Mammary epithelial cell (primary cell): ENCODE measurements at regions of chr20 and their contacts with region 1.

Region 1: GRCh38 chr20:58850693-58851174 is at the start of gene GNAS-AS1:
- DNase-seq: peak; percentile 63
- H3K4me3 ChIP-seq: peak within 1 kb of the TSS; percentile 39 to 64 (median 62)
- H3K27ac ChIP-seq: no peak within 1 kb of the TSS
- H3K4me1 ChIP-seq: peaks cover 12% of the 10 kb centered on the region
- H3K27me3 ChIP-seq: peaks cover 18% of the 10 kb centered on the region
- CTCF ChIP-seq: peak in 1 of 2 donors; percentile 17
- total RNA-seq, gene GNAS-AS1: 0.33 to 0.73 TPM

Region 2: GRCh38 chr20:58236612-58237330 is 614.0 kb before region 1 on chr20:
- CTCF ChIA-PET with region 1: no interaction called
- dilution Hi-C with region 1: no loop called
- in situ Hi-C with region 1: loop called (anchors 25 kb)
- intact Hi-C with region 1: no loop called
- DNase-seq: peak; percentile 58
- H3K4me3 ChIP-seq: peak overlapping the region; percentile 51 to 74 (median 52)
- H3K27ac ChIP-seq: peak overlapping the region; percentile 48
- H3K4me1 ChIP-seq: peaks cover 8% of the 10 kb centered on the region
- H3K27me3 ChIP-seq: no peaks in the 10 kb centered on the region
- CTCF ChIP-seq: peak; percentile 92 to 98

Region 3: DNA sequence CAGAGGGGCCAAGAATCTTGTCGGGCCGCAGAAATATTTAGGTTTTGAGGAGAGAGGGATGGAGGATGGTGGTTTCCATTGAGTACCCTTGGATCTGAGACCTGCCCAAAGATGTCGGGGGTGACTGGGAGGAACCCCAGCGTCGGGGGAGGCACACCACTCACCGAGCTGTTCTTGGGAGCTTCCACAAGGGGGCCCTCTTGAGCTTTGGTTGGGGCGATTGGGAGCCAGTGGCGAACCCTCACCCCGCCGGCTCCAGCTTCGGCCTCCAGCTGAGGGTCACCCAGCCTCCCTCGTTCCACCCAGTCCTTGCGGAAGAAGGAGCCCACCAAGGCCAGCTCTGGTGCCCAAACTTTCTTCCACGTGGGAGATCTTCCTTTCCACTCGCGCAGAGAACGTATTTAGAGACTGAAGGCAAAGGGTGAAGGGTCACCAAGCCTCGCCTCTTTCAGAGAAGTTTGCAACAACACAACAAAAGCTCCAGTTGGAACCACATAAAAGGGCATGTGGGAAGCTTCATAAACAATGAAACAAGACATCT is 369.2 kb before region 1 on chr20:
- CTCF ChIA-PET with region 1: no interaction called
- dilution Hi-C with region 1: no loop called
- in situ Hi-C with region 1: no loop called
- intact Hi-C with region 1: loop called (anchors 5 kb)
- DNase-seq: peak; percentile 29
- H3K4me3 ChIP-seq: no peak overlapping the region
- H3K27ac ChIP-seq: no peak overlapping the region
- H3K4me1 ChIP-seq: peaks cover 4% of the 10 kb centered on the region
- H3K27me3 ChIP-seq: no peaks in the 10 kb centered on the region
- CTCF ChIP-seq: peak; percentile 29 to 68

Region 4: GRCh38 chr20:58584881-58585752 is 265.6 kb before region 1 on chr20:
- CTCF ChIA-PET with region 1: no interaction called
- dilution Hi-C with region 1: no loop called
- in situ Hi-C with region 1: no loop called
- intact Hi-C with region 1: no loop called
- DNase-seq: no peak
- H3K4me3 ChIP-seq: no peak overlapping the region
- H3K27ac ChIP-seq: no peak overlapping the region
- H3K4me1 ChIP-seq: no peaks in the 10 kb centered on the region
- H3K27me3 ChIP-seq: peaks cover 2% of the 10 kb centered on the region
- CTCF ChIP-seq: no peak

Region 5: GRCh38 chr20:58755766-58756449 is 94.8 kb before region 1 on chr20:
- CTCF ChIA-PET with region 1: no interaction called
- dilution Hi-C with region 1: loop called (anchors 5 kb)
- in situ Hi-C with region 1: no loop called
- intact Hi-C with region 1: no loop called
- DNase-seq: no peak
- H3K4me3 ChIP-seq: no peak overlapping the region
- H3K27ac ChIP-seq: no peak overlapping the region
- H3K4me1 ChIP-seq: no peaks in the 10 kb centered on the region
- H3K27me3 ChIP-seq: no peaks in the 10 kb centered on the region
- CTCF ChIP-seq: no peak

Region 6: DNA sequence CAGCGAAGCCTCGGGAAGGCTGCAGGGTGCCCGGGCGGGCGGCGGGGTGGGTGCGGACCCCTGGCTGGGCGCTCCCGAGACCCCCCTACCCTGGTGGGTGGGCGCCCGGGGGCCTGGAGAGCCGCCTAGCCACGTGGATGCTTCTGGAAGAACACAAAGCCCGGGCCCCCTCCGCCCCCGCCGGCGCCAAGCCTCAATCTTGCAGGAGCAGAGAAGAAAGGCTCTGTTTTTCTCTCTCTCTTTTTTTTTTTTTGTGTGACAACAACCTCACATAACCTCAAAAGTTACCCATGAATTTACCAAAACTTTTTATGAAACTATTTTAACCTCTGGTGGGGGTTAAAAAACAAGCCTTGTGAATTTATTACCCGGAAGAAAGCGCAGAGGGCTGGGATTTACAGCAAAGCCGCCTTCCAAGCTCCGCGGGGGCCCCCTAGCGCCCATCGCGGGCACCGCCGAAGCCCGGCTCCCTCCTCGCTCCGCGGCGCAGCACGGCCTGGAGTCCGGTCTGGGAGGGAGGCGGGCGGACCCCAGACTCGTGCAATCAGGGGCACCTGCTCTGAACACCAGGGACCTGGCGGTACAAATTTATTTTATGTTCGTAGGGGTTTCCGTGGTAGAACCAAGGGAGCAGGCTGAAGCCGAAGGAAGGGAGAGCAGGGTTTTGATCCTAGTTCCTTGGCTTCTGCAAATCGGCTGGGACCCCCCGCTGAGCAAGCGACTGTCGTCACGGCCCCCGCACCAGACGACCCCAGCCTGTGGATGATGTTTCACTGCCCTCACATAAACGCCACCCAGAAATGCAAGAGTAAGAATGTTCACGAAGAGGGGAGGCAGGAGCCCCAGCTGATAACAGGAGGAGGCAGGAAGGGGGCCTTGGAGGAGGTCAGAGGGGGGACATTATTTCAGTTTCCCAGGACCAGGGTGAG is 371.8 kb after region 1 on chr20:
- CTCF ChIA-PET with region 1: no interaction called
- dilution Hi-C with region 1: loop called (anchors 25 kb)
- in situ Hi-C with region 1: no loop called
- intact Hi-C with region 1: no loop called
- DNase-seq: peak; percentile 39
- H3K4me3 ChIP-seq: peak overlapping the region; percentile 42 to 74 (median 45)
- H3K27ac ChIP-seq: no peak overlapping the region
- H3K4me1 ChIP-seq: peaks cover 6% of the 10 kb centered on the region
- H3K27me3 ChIP-seq: peaks cover 9% of the 10 kb centered on the region
- CTCF ChIP-seq: peak; percentile 72 to 92

Region 7: GRCh38 chr20:59455402-59456341 is 604.9 kb after region 1 on chr20:
- CTCF ChIA-PET with region 1: no interaction called
- dilution Hi-C with region 1: no loop called
- in situ Hi-C with region 1: loop called (anchors 25 kb)
- intact Hi-C with region 1: no loop called
- DNase-seq: peak; percentile 5
- H3K4me3 ChIP-seq: no peak overlapping the region
- H3K27ac ChIP-seq: no peak overlapping the region
- H3K4me1 ChIP-seq: no peaks in the 10 kb centered on the region
- H3K27me3 ChIP-seq: no peaks in the 10 kb centered on the region
- CTCF ChIP-seq: peak; percentile 48 to 63